Endothelial cell of umbilical vein (primary cell): ENCODE measurements at regions of chr5 and their contacts with region 1.

Region 1: DNA sequence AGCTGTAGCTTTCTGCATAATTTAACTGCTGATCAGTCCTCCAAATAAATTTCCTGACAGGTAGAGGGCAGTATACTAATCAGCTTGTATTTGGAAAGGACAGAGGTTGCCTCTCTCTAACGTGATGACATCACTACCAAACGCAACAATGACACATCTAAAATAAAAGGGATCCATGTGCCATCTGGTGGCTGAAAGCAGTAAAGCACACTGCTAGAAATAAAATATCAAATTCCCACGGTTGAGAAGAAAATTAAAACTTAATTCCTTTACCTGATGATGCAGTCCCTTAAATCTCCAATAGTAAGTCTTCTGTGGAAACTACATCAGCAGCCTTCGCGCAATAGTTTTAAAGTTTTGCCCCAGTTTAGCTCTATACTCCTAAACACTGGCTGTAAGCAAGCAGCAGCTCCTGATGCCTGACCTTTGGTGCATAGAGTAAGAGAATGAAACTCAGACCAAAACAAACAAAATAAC is 54.5 kb downstream of the DIAPH1 start:
- DNase-seq: peak; percentile 94
- H3K4me3 ChIP-seq: no peak overlapping the region
- H3K27ac ChIP-seq: peak overlapping the region; percentile 76
- H3K4me1 ChIP-seq: peaks cover 21% of the 10 kb centered on the region
- H3K27me3 ChIP-seq: no peaks in the 10 kb centered on the region
- CTCF ChIP-seq: peak; percentile 68 to 93
- POLR2A ChIP-seq: no peak

Region 2: DNA sequence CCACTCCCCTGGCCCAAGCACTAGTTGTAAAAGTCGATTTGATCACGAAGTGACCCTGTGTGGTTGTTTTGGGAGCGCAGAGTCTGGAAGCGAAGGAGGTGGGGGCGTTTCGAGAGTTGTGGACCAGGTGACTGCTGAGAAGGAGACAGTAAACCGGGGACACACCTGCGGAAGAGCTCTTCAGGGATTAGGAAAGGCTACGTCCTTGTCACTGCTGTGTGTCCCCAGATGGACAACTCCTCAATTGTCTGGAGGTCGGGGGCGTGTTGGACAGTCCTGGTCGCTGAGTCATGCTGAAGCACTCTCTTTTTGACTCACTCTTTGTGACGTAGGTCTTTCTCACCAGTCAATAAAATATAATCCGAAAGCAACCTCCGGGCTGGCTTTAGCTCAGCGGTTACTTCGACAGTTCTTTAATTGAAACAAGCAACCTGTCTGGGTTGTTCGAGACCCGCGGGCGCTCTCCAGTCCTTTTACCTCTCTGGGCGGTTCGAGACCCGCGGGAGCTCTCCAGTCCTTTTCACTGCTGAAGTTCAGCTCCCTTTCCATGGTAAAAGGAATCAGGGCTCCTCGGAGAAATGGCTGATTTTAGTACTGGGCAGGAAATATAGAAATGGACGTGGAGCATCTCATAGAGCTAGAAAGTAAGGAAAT is 853.2 kb before region 1 on chr5:
- CTCF ChIA-PET with region 1: no interaction called
- POLR2A ChIA-PET with region 1: no interaction called
- dilution Hi-C with region 1: no loop called
- intact Hi-C with region 1: loop called (anchors 5 kb)
- DNase-seq: peak; percentile 100
- H3K4me3 ChIP-seq: peak overlapping the region; percentile 84 to 95 (median 93)
- H3K27ac ChIP-seq: peak overlapping the region; percentile 90
- H3K4me1 ChIP-seq: peaks cover 10% of the 10 kb centered on the region
- H3K27me3 ChIP-seq: no peaks in the 10 kb centered on the region
- CTCF ChIP-seq: no peak
- POLR2A ChIP-seq: no peak

Region 3: DNA sequence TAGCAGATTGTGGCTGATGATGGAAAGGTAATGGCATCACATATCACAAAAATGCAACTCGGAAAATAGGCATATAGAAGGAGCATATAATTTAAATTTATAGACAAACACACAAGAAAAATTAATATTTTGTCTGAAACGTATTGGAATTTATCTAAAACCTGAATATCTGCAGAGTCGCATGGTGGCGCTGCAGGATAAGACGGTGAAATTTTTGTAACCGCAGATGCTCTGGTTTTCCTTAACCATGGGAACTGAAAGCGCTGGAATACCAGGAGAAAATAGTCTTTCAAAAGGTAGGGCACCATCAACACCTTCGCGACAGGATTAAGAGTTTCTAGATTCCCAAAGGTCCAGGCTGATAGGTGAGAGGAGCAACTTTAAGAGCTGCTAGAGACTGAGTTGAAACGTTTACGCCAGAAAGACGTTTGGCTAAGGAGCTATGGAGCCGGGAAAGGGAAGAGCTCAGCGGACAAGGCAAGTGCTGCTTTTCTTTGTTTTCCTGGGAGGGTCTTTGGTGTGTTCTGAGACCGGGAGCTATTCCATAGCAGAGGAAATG is 330.1 kb before region 1 on chr5:
- CTCF ChIA-PET with region 1: interaction called, 14 read pairs
- POLR2A ChIA-PET with region 1: no interaction called
- dilution Hi-C with region 1: no loop called
- intact Hi-C with region 1: no loop called
- DNase-seq: peak; percentile 20
- H3K4me3 ChIP-seq: no peak overlapping the region
- H3K27ac ChIP-seq: no peak overlapping the region
- H3K4me1 ChIP-seq: no peaks in the 10 kb centered on the region
- H3K27me3 ChIP-seq: peaks cover 0 to 5% of the 10 kb centered on the region in 2 experiments
- CTCF ChIP-seq: no peak
- POLR2A ChIP-seq: no peak

Region 4: GRCh38 chr5:141338538-141339306 is 225.5 kb before region 1 on chr5 and contains the start of gene PCDHGA2:
- CTCF ChIA-PET with region 1: interaction called, 51 read pairs
- POLR2A ChIA-PET with region 1: no interaction called
- dilution Hi-C with region 1: no loop called
- intact Hi-C with region 1: no loop called
- DNase-seq: peak; percentile 59
- H3K4me3 ChIP-seq: peak within 1 kb of the TSS in 2 of 3 experiments; percentile 16 to 53
- H3K27ac ChIP-seq: no peak within 1 kb of the TSS
- H3K4me1 ChIP-seq: no peaks in the 10 kb centered on the region
- H3K27me3 ChIP-seq: peaks cover 15 to 66% of the 10 kb centered on the region in 2 experiments
- CTCF ChIP-seq: peak; percentile 43 to 54
- POLR2A ChIP-seq: no peak
- total RNA-seq, gene PCDHGA2: 0.58 and 1.2 TPM in 2 replicates

Region 5: DNA sequence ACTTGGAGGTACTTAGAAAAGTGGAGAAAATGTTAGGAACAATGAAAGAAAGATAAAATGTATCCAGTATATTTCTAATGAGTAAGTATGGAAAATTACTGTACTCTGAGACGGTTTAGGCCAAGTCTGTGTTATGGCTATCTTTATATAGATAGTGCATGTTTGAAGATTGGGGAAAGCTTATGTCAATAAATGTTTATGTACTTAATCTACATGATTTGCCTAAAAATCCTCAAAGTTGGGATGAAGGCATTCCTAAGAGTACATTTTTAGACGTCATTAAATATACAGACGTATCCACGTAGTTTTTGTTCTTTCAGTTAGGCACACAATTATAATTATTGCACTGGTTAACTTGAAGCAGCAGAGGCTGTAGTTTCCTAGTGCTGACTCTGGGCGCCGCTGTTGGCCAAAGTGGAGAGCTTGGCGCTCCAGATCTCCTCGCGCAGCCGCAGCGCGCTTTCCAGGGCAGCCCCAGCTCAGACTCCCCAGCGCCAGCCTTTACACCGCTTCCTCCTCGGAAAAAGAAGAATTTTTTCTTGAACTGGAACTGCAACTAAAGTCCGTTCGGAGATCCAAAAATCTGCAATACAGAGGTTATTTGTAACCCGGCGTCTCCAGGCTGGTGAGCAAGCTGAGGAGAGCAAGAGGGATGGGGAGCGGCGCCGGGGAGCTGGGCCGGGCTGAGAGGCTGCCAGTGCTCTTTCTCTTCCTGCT is 176.9 kb before region 1 on chr5 and contains the start of gene PCDHGB4:
- CTCF ChIA-PET with region 1: interaction called, 26 read pairs
- POLR2A ChIA-PET with region 1: no interaction called
- dilution Hi-C with region 1: no loop called
- intact Hi-C with region 1: no loop called
- DNase-seq: peak; percentile 30
- H3K4me3 ChIP-seq: peak within 1 kb of the TSS in 2 of 3 experiments; percentile 9 to 22
- H3K27ac ChIP-seq: no peak within 1 kb of the TSS
- H3K4me1 ChIP-seq: no peaks in the 10 kb centered on the region
- H3K27me3 ChIP-seq: peaks cover 35 to 78% of the 10 kb centered on the region in 2 experiments
- CTCF ChIP-seq: peak; percentile 46 to 51
- POLR2A ChIP-seq: no peak
- total RNA-seq, gene PCDHGB4: 4.4 and 6.5 TPM in 2 replicates

Region 6: GRCh38 chr5:141420855-141421496 is 143.3 kb before region 1 on chr5 and contains the start of gene PCDHGA11:
- CTCF ChIA-PET with region 1: interaction called, 335 read pairs
- POLR2A ChIA-PET with region 1: interaction called, 3 read pairs
- dilution Hi-C with region 1: no loop called
- intact Hi-C with region 1: loop called (anchors 1 kb)
- DNase-seq: peak; percentile 78
- H3K4me3 ChIP-seq: peak within 1 kb of the TSS; percentile 39 to 83 (median 66)
- H3K27ac ChIP-seq: no peak within 1 kb of the TSS
- H3K4me1 ChIP-seq: peaks cover 15% of the 10 kb centered on the region
- H3K27me3 ChIP-seq: peaks cover 40 to 84% of the 10 kb centered on the region in 2 experiments
- CTCF ChIP-seq: peak; percentile 53 to 71
- POLR2A ChIP-seq: no peak
- total RNA-seq, gene PCDHGA11: 10.3 and 11.5 TPM in 2 replicates

Region 7: DNA sequence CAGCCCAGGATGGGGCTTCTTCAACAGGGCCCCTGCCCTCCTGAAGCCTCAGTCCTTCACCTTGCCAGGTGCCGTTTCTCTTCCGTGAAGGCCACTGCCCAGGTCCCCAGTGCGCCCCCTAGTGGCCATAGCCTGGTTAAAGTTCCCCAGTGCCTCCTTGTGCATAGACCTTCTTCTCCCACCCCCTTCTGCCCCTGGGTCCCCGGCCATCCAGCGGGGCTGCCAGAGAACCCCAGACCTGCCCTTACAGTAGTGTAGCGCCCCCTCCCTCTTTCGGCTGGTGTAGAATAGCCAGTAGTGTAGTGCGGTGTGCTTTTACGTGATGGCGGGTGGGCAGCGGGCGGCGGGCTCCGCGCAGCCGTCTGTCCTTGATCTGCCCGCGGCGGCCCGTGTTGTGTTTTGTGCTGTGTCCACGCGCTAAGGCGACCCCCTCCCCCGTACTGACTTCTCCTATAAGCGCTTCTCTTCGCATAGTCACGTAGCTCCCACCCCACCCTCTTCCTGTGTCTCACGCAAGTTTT is 51.8 kb before region 1 on chr5:
- CTCF ChIA-PET with region 1: interaction called, 17 read pairs
- POLR2A ChIA-PET with region 1: interaction called, 3 read pairs
- dilution Hi-C with region 1: no loop called
- intact Hi-C with region 1: loop called (anchors 2 kb)
- DNase-seq: peak; percentile 76
- H3K4me3 ChIP-seq: peak overlapping the region; percentile 44 to 51 (median 49)
- H3K27ac ChIP-seq: peak overlapping the region; percentile 19
- H3K4me1 ChIP-seq: peaks cover 31% of the 10 kb centered on the region
- H3K27me3 ChIP-seq: no peaks in the 10 kb centered on the region
- CTCF ChIP-seq: peak; percentile 89 to 94
- POLR2A ChIP-seq: no peak